Stomach (tissue), 19 donors: ENCODE measurements at regions of chr5 and their contacts with region 1.

Region 1: GRCh38 chr5:140632150-140633020 is 590 bp downstream of the CD14 start:
- DNase-seq: peak; percentile 58 to 73
- H3K4me3 ChIP-seq: peak overlapping the region; percentile 54 to 63 (median 58)
- H3K27ac ChIP-seq: peak overlapping the region; percentile 27 to 86 (median 73)
- H3K4me1 ChIP-seq: peaks cover 7 to 38% (median 20%) of the 10 kb centered on the region in 4 donors
- H3K27me3 ChIP-seq: no peaks in the 10 kb centered on the region
- CTCF ChIP-seq: no peak
- EP300 ChIP-seq: no peak
- POLR2A ChIP-seq: no peak

Region 2: GRCh38 chr5:140564196-140565023 is 68.0 kb before region 1 on chr5 and contains the starts of genes APBB3 and SLC35A4:
- intact Hi-C with region 1: loop called (anchors 5 kb)
- DNase-seq: peak; percentile 96 to 99
- H3K4me3 ChIP-seq: peak within 1 kb of the TSS; percentile 66 to 79 (median 74)
- H3K27ac ChIP-seq: peak within 1 kb of the TSS; percentile 92 to 95 (median 94)
- H3K4me1 ChIP-seq: peaks cover 24 to 70% (median 59%) of the 10 kb centered on the region in 4 donors
- H3K27me3 ChIP-seq: no peaks in the 10 kb centered on the region
- CTCF ChIP-seq: no peak
- EP300 ChIP-seq: no peak
- POLR2A ChIP-seq: peak in 2 of 4 donors; percentile 66 to 75
- total RNA-seq, gene APBB3: 5.4 to 40.8 (median 22.4) TPM
- total RNA-seq, gene SLC35A4: 11.4 to 62.0 (median 43.0) TPM